ENCODE measurements at regions of chr3 and their contacts with region 1.

Region 1: DNA sequence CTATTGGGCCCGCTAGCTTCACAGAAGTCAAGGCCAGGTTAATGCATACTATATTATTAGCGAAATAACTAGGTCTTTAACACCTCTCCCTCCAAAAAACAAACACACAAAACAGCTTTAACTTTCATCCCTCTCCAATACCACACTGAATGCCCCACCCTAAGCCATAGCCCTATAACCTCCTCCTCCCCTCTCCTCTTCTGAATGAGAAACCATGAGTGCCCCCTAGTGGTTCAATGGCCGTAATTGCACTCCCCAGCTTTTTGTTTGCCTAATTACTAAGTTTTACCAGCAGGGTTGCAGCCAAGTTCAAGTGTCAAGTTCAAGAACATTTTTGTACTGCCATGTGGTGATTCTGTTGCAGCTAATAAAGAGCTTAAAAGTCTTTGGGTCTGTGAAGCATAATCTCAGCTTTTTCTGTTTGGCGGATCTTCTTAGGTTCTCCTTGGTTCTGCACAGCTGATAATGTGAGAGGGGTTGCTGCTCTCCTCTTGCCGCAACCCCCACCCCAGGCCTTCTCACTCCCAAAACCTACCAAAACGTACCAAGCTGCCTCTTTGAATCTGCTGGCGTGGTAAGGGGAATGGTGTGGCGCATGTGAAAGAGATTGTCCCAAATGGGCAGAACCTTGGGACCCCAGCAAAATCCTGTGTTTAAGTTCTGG is 57.9 kb downstream of the RPL22L1 start:
- DNase-seq: peak; percentile 77
- H3K4me3 ChIP-seq: no peak overlapping the region
- H3K27ac ChIP-seq: peak overlapping the region; percentile 48
- H3K4me1 ChIP-seq: peaks cover 37% of the 10 kb centered on the region
- H3K27me3 ChIP-seq: no peaks in the 10 kb centered on the region
- CTCF ChIP-seq: peak; percentile 87 to 98

Region 2: GRCh38 chr3:170414202-170414663 is 397.8 kb before region 1 on chr3:
- CTCF ChIA-PET with region 1: interaction called, 21 read pairs
- dilution Hi-C with region 1: no loop called
- in situ Hi-C with region 1: loop called (anchors 5 kb)
- intact Hi-C with region 1: loop called (anchors 1 kb)
- DNase-seq: peak; percentile 68
- H3K4me3 ChIP-seq: no peak overlapping the region
- H3K27ac ChIP-seq: no peak overlapping the region
- H3K4me1 ChIP-seq: peaks cover 11% of the 10 kb centered on the region
- H3K27me3 ChIP-seq: peaks cover 3% of the 10 kb centered on the region
- CTCF ChIP-seq: peak; percentile 100

Region 3: DNA sequence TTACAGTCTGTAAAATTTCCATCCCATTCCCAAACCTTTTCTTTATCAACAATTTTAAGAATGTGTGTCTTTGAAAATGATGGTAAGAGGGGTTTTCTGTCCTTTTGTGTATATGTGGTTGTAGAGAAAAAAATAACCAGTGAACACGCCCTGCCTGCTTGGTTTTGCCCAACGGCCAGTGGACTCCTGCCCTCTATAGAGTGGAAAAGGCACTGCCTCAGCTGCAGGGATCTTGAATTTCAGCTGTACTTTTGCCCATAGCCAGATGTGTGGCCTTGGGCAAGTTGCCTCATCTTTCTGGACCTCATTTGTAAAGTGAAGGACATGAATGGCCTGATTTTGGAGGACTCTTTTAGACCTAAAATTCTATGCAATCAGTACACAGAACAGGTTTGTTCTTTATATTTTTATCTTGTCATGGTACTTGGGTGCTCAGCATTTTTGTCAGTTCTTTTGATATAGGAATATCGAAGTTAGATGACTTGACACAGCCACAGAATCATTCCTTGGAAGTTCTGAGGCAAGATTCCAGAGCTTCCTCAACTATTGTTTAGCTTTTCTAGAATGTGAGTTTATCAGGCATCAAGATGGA is 312.4 kb before region 1 on chr3:
- CTCF ChIA-PET with region 1: no interaction called
- dilution Hi-C with region 1: no loop called
- in situ Hi-C with region 1: no loop called
- intact Hi-C with region 1: loop called (anchors 1 kb)
- DNase-seq: peak; percentile 41
- H3K4me3 ChIP-seq: no peak overlapping the region
- H3K27ac ChIP-seq: no peak overlapping the region
- H3K4me1 ChIP-seq: peaks cover 8% of the 10 kb centered on the region
- H3K27me3 ChIP-seq: no peaks in the 10 kb centered on the region
- CTCF ChIP-seq: peak; percentile 60 to 80

Region 4: DNA sequence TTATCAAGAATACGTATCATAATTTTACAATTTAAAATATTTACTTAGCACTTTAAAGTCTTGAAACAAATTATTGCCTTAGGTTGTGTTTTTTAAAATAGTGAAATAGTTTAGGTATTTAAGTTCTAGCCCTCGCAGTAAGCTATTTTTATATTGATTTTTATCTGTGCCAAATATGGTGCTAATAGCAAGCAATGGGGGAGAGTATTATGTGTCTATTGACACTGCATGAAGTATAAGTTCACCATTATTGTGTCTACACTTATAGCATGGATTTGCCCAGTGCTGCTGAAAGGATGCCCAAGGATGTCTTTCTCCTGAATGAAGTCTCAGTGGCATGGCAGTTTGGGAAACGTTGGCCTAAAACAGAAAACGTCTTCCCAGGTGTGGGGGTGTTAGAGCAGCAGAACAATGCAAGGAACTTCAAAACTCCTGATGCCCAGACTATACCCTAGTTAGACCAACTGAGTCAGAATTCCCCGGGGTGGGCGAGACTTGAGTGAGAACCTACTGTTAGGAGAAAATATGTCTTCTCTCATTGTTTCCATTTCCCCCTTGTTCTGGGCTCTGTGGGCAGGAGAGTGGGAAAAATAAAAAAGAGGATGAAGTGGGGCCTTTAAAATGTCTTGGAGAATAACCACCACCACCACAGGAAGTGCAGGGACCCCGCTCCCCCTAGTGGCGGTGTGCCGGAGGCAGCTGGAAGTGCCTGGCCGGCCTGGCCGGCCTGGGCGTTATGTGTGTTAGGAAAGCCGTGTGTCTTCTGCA is 122.0 kb before region 1 on chr3:
- CTCF ChIA-PET with region 1: interaction called, 4 read pairs
- dilution Hi-C with region 1: no loop called
- in situ Hi-C with region 1: loop called in 1 of 2 experiments (anchors 10 kb)
- intact Hi-C with region 1: loop called (anchors 1 kb)
- DNase-seq: no peak
- H3K4me3 ChIP-seq: no peak overlapping the region
- H3K27ac ChIP-seq: peak overlapping the region; percentile 92
- H3K4me1 ChIP-seq: peaks cover 36% of the 10 kb centered on the region
- H3K27me3 ChIP-seq: no peaks in the 10 kb centered on the region
- CTCF ChIP-seq: peak; percentile 56 to 63

Region 5: DNA sequence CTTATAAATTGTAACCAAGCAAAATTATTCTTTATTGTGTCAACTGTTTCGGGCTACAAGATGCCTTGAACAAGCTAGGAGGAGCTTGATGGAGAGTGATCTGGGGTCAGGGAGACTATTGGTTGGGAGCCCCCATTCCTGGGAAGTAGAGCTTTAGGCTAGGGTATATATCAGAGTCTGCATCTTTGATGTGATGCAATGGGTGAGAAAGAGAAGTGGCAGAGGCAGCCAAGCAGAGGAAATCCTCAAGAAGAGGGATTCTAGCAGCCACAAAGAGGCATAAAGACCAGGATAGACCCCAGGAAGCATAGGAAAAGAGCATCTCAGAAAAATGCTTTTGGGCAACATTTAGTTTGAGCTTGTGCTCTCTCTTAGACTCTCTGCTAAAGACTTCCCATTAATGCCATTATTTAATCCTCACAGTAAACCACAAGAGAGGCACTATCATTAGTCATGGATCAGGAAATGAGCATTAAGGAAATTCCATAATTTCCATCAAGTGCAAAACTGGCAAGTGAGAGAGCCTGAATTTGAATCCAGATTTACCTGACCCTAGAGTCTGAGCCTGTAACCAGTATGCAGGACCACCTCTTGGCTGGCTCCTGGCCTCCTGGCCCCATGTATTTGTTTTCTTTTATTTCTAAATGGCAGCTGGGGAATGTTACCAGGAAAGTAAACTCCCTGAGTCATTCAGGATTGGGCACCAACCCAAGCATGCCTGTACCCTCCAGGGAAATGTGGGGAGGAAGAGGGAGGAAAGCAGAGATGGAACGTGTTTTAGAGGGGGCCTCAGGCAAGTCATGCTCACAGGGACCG is 60.8 kb before region 1 on chr3:
- CTCF ChIA-PET with region 1: no interaction called
- dilution Hi-C with region 1: no loop called
- in situ Hi-C with region 1: no loop called
- intact Hi-C with region 1: loop called (anchors 2 kb)
- DNase-seq: peak; percentile 90
- H3K4me3 ChIP-seq: no peak overlapping the region
- H3K27ac ChIP-seq: peak overlapping the region; percentile 67
- H3K4me1 ChIP-seq: peaks cover 47% of the 10 kb centered on the region
- H3K27me3 ChIP-seq: no peaks in the 10 kb centered on the region
- CTCF ChIP-seq: no peak

Region 6: GRCh38 chr3:170889132-170889531 is 77.1 kb after region 1 on chr3:
- CTCF ChIA-PET with region 1: no interaction called
- dilution Hi-C with region 1: no loop called
- in situ Hi-C with region 1: no loop called
- intact Hi-C with region 1: no loop called
- DNase-seq: no peak
- H3K4me3 ChIP-seq: no peak overlapping the region
- H3K27ac ChIP-seq: no peak overlapping the region
- H3K4me1 ChIP-seq: no peaks in the 10 kb centered on the region
- H3K27me3 ChIP-seq: no peaks in the 10 kb centered on the region
- CTCF ChIP-seq: no peak